PC-9 (cell line): ENCODE measurements at regions of chr11 and their contacts with region 1.

Region 1: GRCh38 chr11:85464283-85464682 is 162.9 kb downstream of the DLG2 start:
- DNase-seq: no peak
- H3K4me3 ChIP-seq: no peak overlapping the region
- H3K27ac ChIP-seq: no peak overlapping the region
- H3K4me1 ChIP-seq: no peaks in the 10 kb centered on the region
- H3K27me3 ChIP-seq: no peaks in the 10 kb centered on the region
- CTCF ChIP-seq: no peak

Region 2: DNA sequence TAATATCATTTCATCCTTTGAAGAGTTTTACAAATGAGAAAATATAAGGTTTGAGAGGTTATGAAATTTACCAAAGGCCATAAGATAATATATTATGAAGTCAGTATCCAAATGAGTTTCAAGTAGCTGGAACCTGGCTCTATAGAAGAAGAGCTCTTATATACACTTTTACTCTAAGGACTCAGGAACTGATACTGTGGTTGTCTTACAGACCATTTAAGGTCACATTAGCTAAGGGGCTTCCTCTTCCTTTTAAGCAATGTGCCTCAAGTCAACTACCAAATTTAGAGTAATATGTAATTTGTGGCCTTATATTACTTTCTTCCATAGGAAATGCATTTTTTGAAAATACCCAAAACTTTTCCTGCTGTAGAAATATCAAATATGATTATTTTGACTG is 206.4 kb before region 1 on chr11:
- CTCF ChIA-PET with region 1: no interaction called
- POLR2A ChIA-PET with region 1: no interaction called
- intact Hi-C with region 1: no loop called
- DNase-seq: no peak
- H3K4me3 ChIP-seq: no peak overlapping the region
- H3K27ac ChIP-seq: no peak overlapping the region
- H3K4me1 ChIP-seq: no peaks in the 10 kb centered on the region
- H3K27me3 ChIP-seq: no peaks in the 10 kb centered on the region
- CTCF ChIP-seq: no peak

Region 3: GRCh38 chr11:85444479-85444878 is 19.8 kb before region 1 on chr11:
- CTCF ChIA-PET with region 1: no interaction called
- POLR2A ChIA-PET with region 1: no interaction called
- intact Hi-C with region 1: no loop called
- DNase-seq: no peak
- H3K4me3 ChIP-seq: no peak overlapping the region
- H3K27ac ChIP-seq: no peak overlapping the region
- H3K4me1 ChIP-seq: no peaks in the 10 kb centered on the region
- H3K27me3 ChIP-seq: no peaks in the 10 kb centered on the region
- CTCF ChIP-seq: no peak

Region 4: GRCh38 chr11:85705805-85706204 is 241.5 kb after region 1 on chr11:
- CTCF ChIA-PET with region 1: interaction called, 14 read pairs
- POLR2A ChIA-PET with region 1: no interaction called
- intact Hi-C with region 1: no loop called
- DNase-seq: no peak
- H3K4me3 ChIP-seq: no peak overlapping the region
- H3K27ac ChIP-seq: no peak overlapping the region
- H3K4me1 ChIP-seq: no peaks in the 10 kb centered on the region
- H3K27me3 ChIP-seq: no peaks in the 10 kb centered on the region
- CTCF ChIP-seq: no peak